Vagina (tissue), 2 donors: ENCODE measurements at regions of chr10 and their contacts with region 1.

Region 1: GRCh38 chr10:103966671-103967447 is at the start of gene SLK:
- DNase-seq: peak in 1 of 2 donors; percentile 91
- H3K4me3 ChIP-seq: peak within 1 kb of the TSS; percentile 88 to 96
- H3K27ac ChIP-seq: peak within 1 kb of the TSS; percentile 97
- H3K4me1 ChIP-seq: peaks cover 39% of the 10 kb centered on the region
- H3K27me3 ChIP-seq: no peaks in the 10 kb centered on the region
- CTCF ChIP-seq: no peak
- POLR2A ChIP-seq: peak; percentile 6 to 97
- total RNA-seq, gene SLK: 50.1 TPM

Region 2: DNA sequence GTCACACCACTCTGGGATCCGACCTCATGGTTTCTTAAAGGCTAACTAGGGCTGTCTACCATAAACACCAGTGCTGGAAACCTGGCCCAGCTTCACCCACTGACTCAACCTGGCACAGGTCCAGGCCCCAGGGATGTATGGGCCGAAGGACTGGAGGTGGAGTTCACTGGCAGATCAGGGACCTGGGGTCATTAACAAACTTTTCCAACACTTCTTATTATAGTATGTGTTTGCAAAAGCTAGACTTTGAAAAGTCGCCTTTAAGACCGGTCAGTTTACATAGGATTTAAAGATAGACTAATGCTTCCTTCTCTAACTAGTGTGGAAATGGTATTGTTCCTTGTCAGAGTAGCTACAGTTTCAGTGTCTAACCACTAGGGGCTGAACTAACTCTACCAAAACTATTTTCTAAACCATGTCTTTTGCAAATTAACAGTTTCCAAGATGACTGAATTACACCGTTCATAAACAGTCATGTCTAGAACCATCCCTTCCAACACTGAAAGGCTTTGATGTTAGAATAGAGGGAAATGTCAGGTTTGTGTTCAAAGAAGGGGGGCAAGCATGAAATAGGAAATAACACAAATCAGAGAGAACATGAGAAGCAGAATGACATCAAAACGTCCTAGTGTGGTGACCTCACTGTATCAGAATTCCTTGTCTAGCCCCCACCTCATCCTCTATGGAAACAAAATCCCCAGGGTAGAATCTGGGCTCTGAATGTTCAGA is 78.6 kb before region 1 on chr10:
- intact Hi-C with region 1: no loop called
- DNase-seq: peak in 1 of 2 donors; percentile 83
- H3K4me3 ChIP-seq: no peak overlapping the region
- H3K27ac ChIP-seq: peak overlapping the region; percentile 66
- H3K4me1 ChIP-seq: peaks cover 49% of the 10 kb centered on the region
- H3K27me3 ChIP-seq: no peaks in the 10 kb centered on the region
- CTCF ChIP-seq: peak; percentile 80 to 90 (median 84)
- POLR2A ChIP-seq: no peak

Region 3: DNA sequence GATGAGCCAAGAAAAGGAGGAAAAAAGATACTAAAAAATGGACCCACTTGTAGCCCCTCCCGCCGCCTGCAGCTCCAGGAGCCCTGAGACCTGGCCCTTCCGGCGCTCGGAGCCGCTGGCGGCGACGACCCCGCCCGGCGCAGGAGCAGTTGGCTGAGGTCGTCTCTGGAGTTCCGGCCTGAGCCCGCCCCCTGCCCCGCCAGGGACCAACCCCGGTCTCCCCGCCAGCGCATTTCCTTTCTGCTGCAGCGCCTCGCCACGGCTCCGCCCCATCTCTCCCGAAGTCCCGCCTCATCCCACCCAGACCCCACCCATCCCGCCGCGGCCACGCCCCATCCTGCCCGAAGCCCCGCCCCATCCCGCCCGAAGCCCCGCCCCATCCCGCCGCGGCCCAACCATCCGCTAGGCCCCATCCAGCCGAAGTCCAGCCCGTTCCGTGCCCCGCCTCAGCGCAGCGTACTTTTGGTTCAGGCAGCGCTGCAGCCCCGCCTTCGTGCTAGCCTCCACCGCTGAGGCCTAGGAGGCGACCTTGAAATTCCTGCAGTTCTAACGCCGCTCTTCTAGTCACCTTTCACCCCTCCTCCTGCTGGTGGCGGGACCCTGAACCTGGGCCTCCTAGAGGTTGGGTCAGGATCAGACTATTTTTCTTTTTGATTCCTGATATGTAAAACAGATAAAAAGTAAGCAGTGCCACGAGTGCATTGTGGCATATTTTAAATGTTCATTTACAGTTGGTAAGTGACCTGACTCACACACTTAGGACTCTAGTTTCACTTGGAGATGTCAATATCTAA is 48.6 kb before region 1 on chr10 and contains the start of gene STN1:
- intact Hi-C with region 1: loop called (anchors 5 kb)
- DNase-seq: peak; percentile 97 to 98
- H3K4me3 ChIP-seq: peak within 1 kb of the TSS; percentile 59 to 78
- H3K27ac ChIP-seq: peak within 1 kb of the TSS; percentile 87
- H3K4me1 ChIP-seq: peaks cover 39% of the 10 kb centered on the region
- H3K27me3 ChIP-seq: no peaks in the 10 kb centered on the region
- CTCF ChIP-seq: no peak
- POLR2A ChIP-seq: peak in 1 of 2 donors; percentile 91
- total RNA-seq, gene STN1: 22.3 TPM